ENCODE measurements at regions of chr17 and their contacts with region 1.

Region 1: GRCh38 chr17:72725433-72726068 is 366.9 kb downstream of the SLC39A11 start:
- DNase-seq: peak; percentile 39 to 52 (median 52)
- H3K4me3 ChIP-seq: no peak overlapping the region
- H3K27ac ChIP-seq: no peak overlapping the region
- H3K4me1 ChIP-seq: peaks cover 4 to 45% (median 21%) of the 10 kb centered on the region in 4 experiments
- H3K27me3 ChIP-seq: no peaks in the 10 kb centered on the region

Region 2: GRCh38 chr17:72556944-72557826 is 168.4 kb before region 1 on chr17:
- CTCF ChIA-PET with region 1: interaction called, 101 read pairs
- POLR2A ChIA-PET with region 1: no interaction called
- DNase-seq: peak; percentile 69 to 77 (median 72)
- H3K4me3 ChIP-seq: no peak overlapping the region
- H3K27ac ChIP-seq: no peak overlapping the region
- H3K4me1 ChIP-seq: peaks cover 0 to 3% (median under 1%) of the 10 kb centered on the region in 4 experiments
- H3K27me3 ChIP-seq: no peaks in the 10 kb centered on the region

Region 3: DNA sequence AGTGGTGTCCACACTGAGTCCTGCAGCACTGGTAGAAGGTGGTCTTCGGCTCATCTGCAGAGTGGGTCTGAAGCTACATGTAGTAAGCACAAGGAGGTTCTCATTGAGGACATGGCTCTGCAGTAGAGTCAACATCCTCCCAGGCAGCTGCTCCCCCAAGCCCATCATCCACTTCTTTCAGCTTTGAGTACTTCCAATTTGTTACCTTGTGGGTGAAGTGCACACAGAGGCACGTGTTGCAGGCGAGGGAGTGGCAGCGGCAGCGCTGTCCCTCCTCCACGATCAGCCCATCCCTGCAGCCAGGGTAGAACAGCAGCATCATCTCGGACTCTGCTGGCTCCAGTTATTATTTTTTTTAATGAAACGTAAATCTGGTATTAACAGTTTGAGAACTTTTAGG is 437.5 kb after region 1 on chr17:
- CTCF ChIA-PET with region 1: interaction called, 12 read pairs
- POLR2A ChIA-PET with region 1: no interaction called
- DNase-seq: no peak
- H3K4me3 ChIP-seq: no peak overlapping the region
- H3K27ac ChIP-seq: no peak overlapping the region
- H3K4me1 ChIP-seq: peaks cover 0 to 34% (median 32%) of the 10 kb centered on the region in 4 experiments
- H3K27me3 ChIP-seq: peaks cover 10 to 70% (median 36%) of the 10 kb centered on the region in 5 experiments

Region 4: GRCh38 chr17:73189417-73190099 is 464.0 kb after region 1 on chr17:
- CTCF ChIA-PET with region 1: interaction called, 55 read pairs
- POLR2A ChIA-PET with region 1: no interaction called
- DNase-seq: peak in 2 of 3 donors; percentile 38 to 45
- H3K4me3 ChIP-seq: no peak overlapping the region
- H3K27ac ChIP-seq: no peak overlapping the region
- H3K4me1 ChIP-seq: peaks cover 0 to 27% (median 17%) of the 10 kb centered on the region in 4 experiments
- H3K27me3 ChIP-seq: no peaks in the 10 kb centered on the region

Region 5: DNA sequence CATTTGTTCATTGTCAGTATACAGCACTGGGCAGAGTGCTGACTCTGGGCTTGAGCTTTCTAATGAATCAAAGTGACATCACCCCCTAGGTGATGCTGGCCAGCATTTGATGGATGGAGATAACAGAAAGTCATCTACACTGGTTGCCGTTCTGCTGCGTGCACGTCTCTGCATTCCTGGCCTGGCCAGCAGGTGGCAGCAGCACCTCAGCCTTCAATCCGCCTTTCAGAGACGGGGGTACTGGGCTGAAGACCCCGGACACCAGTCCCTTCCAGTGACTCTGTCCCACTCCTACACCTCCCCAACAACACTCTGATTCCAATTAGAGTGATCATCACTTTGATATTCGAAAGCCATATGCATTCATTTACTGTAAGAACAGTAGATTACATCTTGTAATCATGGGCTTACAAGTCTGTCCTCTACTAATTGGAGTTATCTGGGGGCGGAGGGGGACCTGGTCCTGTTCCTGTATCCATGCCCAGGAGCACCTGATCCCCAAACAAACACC is 530.2 kb after region 1 on chr17:
- CTCF ChIA-PET with region 1: interaction called, 32 read pairs
- POLR2A ChIA-PET with region 1: no interaction called
- DNase-seq: peak; percentile 39 to 55 (median 51)
- H3K4me3 ChIP-seq: no peak overlapping the region
- H3K27ac ChIP-seq: no peak overlapping the region
- H3K4me1 ChIP-seq: no peaks in the 10 kb centered on the region
- H3K27me3 ChIP-seq: no peaks in the 10 kb centered on the region